Gastrocnemius medialis (tissue), 4 donors: ENCODE measurements at regions of chr12 and their contacts with region 1.

Region 1: GRCh38 chr12:68031881-68032739 is 42.9 kb downstream of the IFNG-AS1 start:
- DNase-seq: no peak
- ATAC-seq: no peak
- H3K4me3 ChIP-seq: no peak overlapping the region
- H3K27ac ChIP-seq: no peak overlapping the region
- H3K4me1 ChIP-seq: no peaks in the 10 kb centered on the region
- H3K27me3 ChIP-seq: no peaks in the 10 kb centered on the region
- CTCF ChIP-seq: no peak
- POLR2A ChIP-seq: no peak

Region 2: GRCh38 chr12:67991158-67991557 is 41.0 kb before region 1 on chr12:
- in situ Hi-C with region 1: no loop called
- intact Hi-C with region 1: no loop called
- DNase-seq: no peak
- ATAC-seq: no peak
- H3K4me3 ChIP-seq: no peak overlapping the region
- H3K27ac ChIP-seq: no peak overlapping the region
- H3K4me1 ChIP-seq: no peaks in the 10 kb centered on the region
- H3K27me3 ChIP-seq: no peaks in the 10 kb centered on the region
- CTCF ChIP-seq: no peak
- POLR2A ChIP-seq: no peak

Region 3: DNA sequence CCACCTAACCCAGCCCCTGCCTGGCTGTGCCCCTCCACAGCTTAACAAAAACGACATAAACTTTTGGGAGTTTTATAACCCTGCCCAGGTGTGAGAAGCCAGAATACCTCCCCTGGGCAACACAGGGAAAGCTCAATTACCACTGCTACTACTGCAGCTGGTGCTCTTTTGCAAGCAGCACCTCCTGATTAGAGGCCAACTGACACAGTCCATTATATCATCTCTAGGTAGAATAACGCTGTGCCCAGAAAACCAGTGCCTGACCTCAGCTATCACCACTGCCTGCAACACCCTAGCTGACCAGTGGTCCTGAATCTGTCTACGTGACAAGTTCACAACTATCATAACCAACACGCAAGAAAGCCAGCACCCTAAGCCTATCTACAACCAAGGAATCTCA is 265.8 kb after region 1 on chr12:
- in situ Hi-C with region 1: loop called in 3 of 4 experiments (anchors 10 to 25 kb)
- intact Hi-C with region 1: loop called (anchors 5 kb)
- DNase-seq: no peak
- ATAC-seq: no peak
- H3K4me3 ChIP-seq: no peak overlapping the region
- H3K27ac ChIP-seq: no peak overlapping the region
- H3K4me1 ChIP-seq: peaks cover 11 to 13% of the 10 kb centered on the region in 2 donors
- H3K27me3 ChIP-seq: no peaks in the 10 kb centered on the region
- CTCF ChIP-seq: no peak
- POLR2A ChIP-seq: no peak

Region 4: DNA sequence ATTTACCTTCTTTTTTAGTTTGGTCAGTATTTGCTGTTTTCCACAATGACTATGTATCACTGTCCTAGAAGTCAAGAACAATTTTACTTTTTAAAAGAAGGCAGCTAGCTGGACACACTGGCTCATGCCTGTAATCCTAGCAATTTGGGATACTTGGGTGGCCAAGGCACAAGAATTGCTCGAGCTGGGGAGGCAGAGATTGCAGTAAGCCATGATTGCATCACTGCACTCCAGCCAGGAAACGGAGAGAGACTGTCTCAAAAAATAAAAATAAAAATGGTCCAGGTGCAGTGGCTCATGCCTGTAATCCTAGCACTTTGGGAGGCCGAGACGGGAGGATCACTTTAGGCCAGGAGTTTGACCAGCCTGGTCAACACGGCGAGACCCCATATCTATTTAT is 271.7 kb after region 1 on chr12:
- in situ Hi-C with region 1: loop called in 3 of 4 experiments (anchors 10 to 25 kb)
- intact Hi-C with region 1: loop called (anchors 5 kb)
- DNase-seq: peak in 1 of 2 donors; percentile 5
- ATAC-seq: peak in 1 of 2 donors; percentile 39
- H3K4me3 ChIP-seq: no peak overlapping the region
- H3K27ac ChIP-seq: no peak overlapping the region
- H3K4me1 ChIP-seq: no peaks in the 10 kb centered on the region
- H3K27me3 ChIP-seq: no peaks in the 10 kb centered on the region
- CTCF ChIP-seq: no peak
- POLR2A ChIP-seq: no peak